Esophagus muscularis mucosa (tissue), 4 donors: ENCODE measurements at regions of chrX and their contacts with region 1.

Region 1: GRCh38 chrX:65034668-65035445 is 58.6 kb upstream of the ZC4H2 start:
- DNase-seq: no peak
- H3K4me3 ChIP-seq: peak within 1 kb of the TSS; percentile 65 to 72 (median 67)
- H3K27ac ChIP-seq: peak within 1 kb of the TSS; percentile 84 to 89 (median 86)
- H3K4me1 ChIP-seq: peaks cover 0 to 12% (median 3%) of the 10 kb centered on the region in 4 donors
- H3K27me3 ChIP-seq: peaks cover 0 to 3% (median 0%) of the 10 kb centered on the region in 4 donors
- CTCF ChIP-seq: peak in 2 of 3 experiments; percentile 20 to 67
- EP300 ChIP-seq: no peak
- POLR2A ChIP-seq: no peak

Region 2: DNA sequence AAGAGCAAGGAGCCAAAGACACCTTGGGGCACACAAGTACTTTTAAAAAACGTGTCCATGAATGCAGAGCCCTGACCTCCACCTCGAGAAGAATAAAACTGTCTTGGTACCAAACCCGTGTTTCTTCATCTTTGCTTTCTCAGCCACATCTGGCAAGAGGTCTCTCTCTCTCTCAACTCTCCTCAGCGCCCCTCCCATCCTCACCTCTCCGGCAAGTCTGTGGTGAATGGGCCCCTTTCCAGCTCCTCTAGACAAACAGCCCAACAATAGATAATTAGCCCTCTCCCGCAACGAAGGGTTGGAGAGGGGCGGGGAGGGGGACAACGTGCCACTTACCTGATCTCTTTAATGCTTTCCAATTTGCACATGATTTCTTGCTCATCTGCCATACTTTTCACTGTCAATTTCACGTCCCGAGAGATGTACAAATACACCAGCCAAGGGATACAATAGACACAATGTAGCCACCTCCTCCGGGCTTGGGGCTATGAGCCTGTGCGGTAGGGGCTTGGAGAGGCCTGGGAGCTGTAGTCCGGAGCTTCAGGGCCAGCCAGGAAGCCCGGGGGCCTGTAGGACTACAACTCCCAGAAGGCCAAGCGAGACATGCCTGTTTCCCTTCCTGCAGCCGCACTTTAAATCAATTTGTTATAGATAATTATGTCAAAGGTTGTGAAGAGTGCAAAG is 58.7 kb before region 1 on chrX and contains the start of gene ZC4H2:
- intact Hi-C with region 1: loop called (anchors 5 kb)
- DNase-seq: peak; percentile 90
- H3K4me3 ChIP-seq: peak within 1 kb of the TSS; percentile 56 to 67 (median 62)
- H3K27ac ChIP-seq: peak within 1 kb of the TSS; percentile 53 to 70 (median 60)
- H3K4me1 ChIP-seq: peaks cover 0 to 11% (median 3%) of the 10 kb centered on the region in 4 donors
- H3K27me3 ChIP-seq: no peaks in the 10 kb centered on the region
- CTCF ChIP-seq: no peak
- EP300 ChIP-seq: no peak
- POLR2A ChIP-seq: no peak
- total RNA-seq, gene ZC4H2: 11.5 to 14.1 (median 12.6) TPM